IMR-90 (cell line): ENCODE measurements at regions of chr2 and their contacts with region 1.

Region 1: GRCh38 chr2:217289877-217290279 is 430.0 kb upstream of the TNP1 start:
- DNase-seq: peak; percentile 69
- ATAC-seq: peak; percentile 31
- H3K4me3 ChIP-seq: no peak overlapping the region
- H3K27ac ChIP-seq: peak overlapping the region; percentile 69
- H3K4me1 ChIP-seq: peaks cover 30% of the 10 kb centered on the region
- H3K27me3 ChIP-seq: no peaks in the 10 kb centered on the region
- CTCF ChIP-seq: no peak
- POLR2A ChIP-seq: no peak
- RAD21 ChIP-seq: no peak

Region 2: DNA sequence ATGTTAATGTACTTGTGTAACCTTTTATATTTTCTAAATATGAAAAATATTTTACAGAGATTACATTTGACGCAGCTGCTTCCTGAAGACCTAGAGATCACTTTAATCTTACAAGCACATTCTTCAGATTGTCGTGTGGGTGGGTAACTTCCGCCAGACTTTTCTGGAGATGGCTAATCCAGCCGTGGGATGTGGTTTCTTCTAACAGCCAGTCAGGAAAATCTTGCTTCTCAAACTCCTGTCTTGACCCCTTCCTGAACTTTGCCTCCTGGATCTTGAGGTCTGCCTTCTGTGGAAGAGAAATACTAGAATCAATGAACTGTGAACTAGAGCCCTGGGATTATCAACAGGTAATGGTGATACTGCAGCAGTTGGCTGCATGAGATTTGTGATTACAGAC is 28.4 kb before region 1 on chr2:
- CTCF ChIA-PET with region 1: no interaction called
- POLR2A ChIA-PET with region 1: no interaction called
- dilution Hi-C with region 1: no loop called
- in situ Hi-C with region 1: no loop called
- intact Hi-C with region 1: no loop called
- DNase-seq: peak; percentile 61
- ATAC-seq: no peak; the same call in 1 of the 2 replicates
- H3K4me3 ChIP-seq: no peak overlapping the region
- H3K27ac ChIP-seq: no peak overlapping the region
- H3K4me1 ChIP-seq: peaks cover 3% of the 10 kb centered on the region; the same call in 1 of the 2 replicates
- H3K27me3 ChIP-seq: no peaks in the 10 kb centered on the region
- CTCF ChIP-seq: no peak
- POLR2A ChIP-seq: no peak
- RAD21 ChIP-seq: no peak

Region 3: DNA sequence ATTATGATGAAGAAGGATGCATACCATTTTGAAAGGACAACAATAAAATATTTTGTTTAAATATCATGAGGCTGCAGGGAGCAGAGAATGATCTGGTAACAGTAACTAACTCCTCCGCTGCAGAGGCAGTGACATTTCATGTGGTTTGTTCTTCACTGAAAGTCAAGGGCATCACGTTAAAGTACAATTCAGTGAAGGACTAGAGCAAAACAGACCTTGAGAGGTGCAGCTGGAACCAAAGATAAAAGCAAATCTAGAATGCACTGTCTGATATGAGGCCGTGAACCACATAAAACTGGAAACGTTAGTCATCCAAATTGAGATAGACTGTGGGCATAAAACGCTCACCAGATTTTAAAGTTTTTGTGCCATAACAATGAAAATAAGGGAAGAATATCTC is 92.9 kb after region 1 on chr2:
- CTCF ChIA-PET with region 1: no interaction called
- POLR2A ChIA-PET with region 1: no interaction called
- dilution Hi-C with region 1: no loop called
- in situ Hi-C with region 1: no loop called
- intact Hi-C with region 1: loop called (anchors 5 kb)
- DNase-seq: no peak
- ATAC-seq: no peak
- H3K4me3 ChIP-seq: no peak overlapping the region
- H3K27ac ChIP-seq: peak overlapping the region; percentile 79
- H3K4me1 ChIP-seq: peaks cover 20% of the 10 kb centered on the region
- H3K27me3 ChIP-seq: no peaks in the 10 kb centered on the region
- CTCF ChIP-seq: no peak
- POLR2A ChIP-seq: no peak
- RAD21 ChIP-seq: no peak

Region 4: DNA sequence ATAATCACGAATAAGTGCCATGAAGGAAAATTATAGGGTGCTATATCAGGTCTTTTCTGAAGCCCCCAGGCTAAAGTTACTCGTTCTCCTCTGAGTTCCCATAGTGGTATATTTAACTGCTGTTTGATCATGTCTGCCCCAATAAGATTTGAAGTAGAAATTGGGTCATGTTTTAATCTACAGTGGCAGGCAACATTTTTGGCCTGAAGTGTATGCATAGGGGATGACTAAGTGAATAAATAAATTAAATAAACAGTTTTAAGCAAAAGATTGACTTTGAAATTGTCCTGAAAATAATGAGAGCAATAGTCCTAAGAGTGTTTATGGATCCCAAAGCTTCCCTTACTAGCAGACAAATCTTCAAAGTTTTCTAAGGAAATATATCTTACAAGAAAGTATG is 212.0 kb after region 1 on chr2:
- CTCF ChIA-PET with region 1: no interaction called
- POLR2A ChIA-PET with region 1: no interaction called
- dilution Hi-C with region 1: no loop called
- in situ Hi-C with region 1: loop called (anchors 10 kb)
- intact Hi-C with region 1: no loop called
- DNase-seq: no peak
- ATAC-seq: peak; percentile 32; the same call in 1 of the 2 replicates
- H3K4me3 ChIP-seq: no peak overlapping the region
- H3K27ac ChIP-seq: peak overlapping the region; percentile 23; the same call in 1 of the 2 replicates
- H3K4me1 ChIP-seq: peaks cover 2% of the 10 kb centered on the region; the same call in 1 of the 2 replicates
- H3K27me3 ChIP-seq: no peaks in the 10 kb centered on the region
- CTCF ChIP-seq: no peak
- POLR2A ChIP-seq: no peak
- RAD21 ChIP-seq: no peak

Region 5: DNA sequence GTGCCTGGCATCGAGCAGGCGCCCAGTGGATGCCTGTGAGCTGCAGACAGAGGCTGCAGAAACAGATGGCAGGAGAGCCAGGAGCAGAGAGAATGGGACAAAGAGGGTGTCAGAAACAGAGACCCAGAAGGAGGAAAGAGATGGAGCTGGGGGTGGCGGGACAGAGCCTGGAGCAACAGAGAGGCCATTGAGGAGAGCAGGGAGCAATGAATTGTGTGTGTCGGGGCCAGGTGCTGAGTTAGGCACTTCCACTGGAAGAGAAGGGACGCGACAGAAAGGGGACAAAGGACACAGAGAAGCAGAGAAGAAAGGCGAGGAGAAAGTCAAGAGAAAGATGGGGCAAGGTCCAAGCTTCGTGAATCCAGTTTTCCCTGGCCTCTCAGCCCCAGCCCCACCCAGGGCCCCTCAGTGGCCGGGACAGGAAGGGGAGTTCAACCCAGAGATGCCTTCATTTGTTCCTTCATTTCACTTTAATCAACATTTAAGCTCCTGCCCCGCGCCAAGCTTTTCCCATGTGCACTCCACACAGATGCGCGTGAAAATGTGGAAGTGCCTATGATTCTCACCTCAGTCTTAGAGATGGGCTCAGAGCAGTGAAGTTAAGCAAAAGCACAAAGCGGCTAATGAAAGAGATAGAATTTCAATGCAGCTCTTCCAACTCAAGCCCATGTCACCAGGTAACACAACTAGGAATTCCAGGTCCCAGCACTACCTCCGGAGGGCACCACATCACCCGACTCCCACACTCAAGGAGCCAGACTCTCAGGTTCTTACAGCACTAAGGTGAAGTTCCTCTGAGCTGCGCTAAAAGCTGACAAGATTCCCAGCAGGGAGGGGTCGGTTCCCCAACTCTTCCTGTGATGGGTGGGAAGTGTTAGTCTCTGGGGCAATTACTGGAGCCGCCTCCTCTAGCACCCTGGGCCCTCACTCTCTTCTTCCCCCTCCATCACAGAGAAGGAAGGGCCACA is 657.8 kb after region 1 on chr2:
- CTCF ChIA-PET with region 1: no interaction called
- POLR2A ChIA-PET with region 1: no interaction called
- dilution Hi-C with region 1: no loop called
- in situ Hi-C with region 1: no loop called
- intact Hi-C with region 1: no loop called
- DNase-seq: no peak
- ATAC-seq: no peak
- H3K4me3 ChIP-seq: no peak overlapping the region
- H3K27ac ChIP-seq: no peak overlapping the region
- H3K4me1 ChIP-seq: peaks cover 30% of the 10 kb centered on the region
- H3K27me3 ChIP-seq: no peaks in the 10 kb centered on the region
- CTCF ChIP-seq: no peak
- POLR2A ChIP-seq: no peak
- RAD21 ChIP-seq: no peak